HEK293 (cell line): ENCODE measurements at regions of chr19 and their contacts with region 1.

Region 1: DNA sequence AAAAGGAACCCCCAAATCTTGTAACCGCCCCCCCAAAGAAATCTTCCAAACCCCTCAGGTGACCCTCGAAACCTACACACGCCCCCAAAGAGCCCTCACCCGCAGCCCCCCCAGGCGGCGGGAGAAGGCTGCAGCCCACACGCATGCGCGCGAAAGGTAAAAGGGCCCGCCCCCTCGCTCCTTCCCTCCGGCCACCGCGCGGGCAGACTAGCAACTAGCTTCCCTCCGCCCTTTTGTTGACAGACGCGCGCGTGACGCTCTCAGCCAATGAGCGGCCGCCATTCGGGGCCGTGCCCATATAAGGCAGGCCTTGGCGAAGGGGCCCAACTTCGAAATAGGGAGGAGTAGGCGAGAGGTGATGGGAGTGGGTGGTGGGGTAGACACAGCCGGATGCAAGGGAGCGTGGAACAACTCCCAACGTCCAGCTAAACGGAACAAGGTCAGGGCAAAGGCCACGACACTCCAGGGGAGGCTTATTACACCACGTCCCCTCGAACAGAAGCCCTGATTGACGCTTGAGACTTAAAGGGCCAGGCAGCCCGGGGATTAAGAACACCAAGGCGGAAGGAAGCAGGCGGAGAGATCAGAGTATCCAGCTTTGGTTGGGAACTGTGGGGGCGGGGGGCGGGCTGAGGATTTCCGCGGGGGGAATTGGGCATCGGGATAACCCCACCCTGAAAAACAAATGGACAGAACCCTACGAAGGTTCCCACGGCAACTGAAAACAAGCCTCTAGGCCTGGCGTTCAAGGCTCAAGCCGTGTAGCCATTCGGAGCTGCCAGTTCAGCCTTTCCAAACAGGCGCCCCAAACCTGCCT is 13.3 kb downstream of the FBXO46 start:
- H3K4me3 ChIP-seq: peak overlapping the region; percentile 72
- H3K27ac ChIP-seq: peak overlapping the region; percentile 92
- H3K4me1 ChIP-seq: peaks cover 19% of the 10 kb centered on the region
- CTCF ChIP-seq: peak; percentile 81

Region 2: DNA sequence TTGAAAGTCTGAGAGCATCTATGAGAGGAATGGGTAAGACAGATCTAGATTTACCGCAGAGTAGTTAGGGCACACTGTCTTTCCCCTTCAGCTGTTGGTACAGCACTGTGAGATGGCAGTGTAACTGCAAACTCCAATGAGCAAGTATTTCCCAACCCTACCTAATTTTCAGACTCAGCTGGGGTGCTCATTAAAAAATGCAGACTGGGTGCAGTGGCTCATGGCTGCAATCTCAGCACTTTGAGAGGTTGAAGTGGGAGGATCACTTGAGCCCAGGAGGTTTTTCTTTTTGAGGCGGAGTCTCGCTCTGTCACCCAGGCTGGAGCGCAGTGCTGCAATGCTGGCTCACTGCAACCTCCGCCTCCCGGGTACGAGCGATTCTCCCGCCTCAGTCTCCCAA is 12.3 kb before region 1 on chr19:
- CTCF ChIA-PET with region 1: interaction called, 5 read pairs
- POLR2A ChIA-PET with region 1: interaction called, 17 read pairs
- H3K4me3 ChIP-seq: no peak overlapping the region
- H3K27ac ChIP-seq: no peak overlapping the region
- H3K4me1 ChIP-seq: no peaks in the 10 kb centered on the region
- CTCF ChIP-seq: no peak

Region 3: DNA sequence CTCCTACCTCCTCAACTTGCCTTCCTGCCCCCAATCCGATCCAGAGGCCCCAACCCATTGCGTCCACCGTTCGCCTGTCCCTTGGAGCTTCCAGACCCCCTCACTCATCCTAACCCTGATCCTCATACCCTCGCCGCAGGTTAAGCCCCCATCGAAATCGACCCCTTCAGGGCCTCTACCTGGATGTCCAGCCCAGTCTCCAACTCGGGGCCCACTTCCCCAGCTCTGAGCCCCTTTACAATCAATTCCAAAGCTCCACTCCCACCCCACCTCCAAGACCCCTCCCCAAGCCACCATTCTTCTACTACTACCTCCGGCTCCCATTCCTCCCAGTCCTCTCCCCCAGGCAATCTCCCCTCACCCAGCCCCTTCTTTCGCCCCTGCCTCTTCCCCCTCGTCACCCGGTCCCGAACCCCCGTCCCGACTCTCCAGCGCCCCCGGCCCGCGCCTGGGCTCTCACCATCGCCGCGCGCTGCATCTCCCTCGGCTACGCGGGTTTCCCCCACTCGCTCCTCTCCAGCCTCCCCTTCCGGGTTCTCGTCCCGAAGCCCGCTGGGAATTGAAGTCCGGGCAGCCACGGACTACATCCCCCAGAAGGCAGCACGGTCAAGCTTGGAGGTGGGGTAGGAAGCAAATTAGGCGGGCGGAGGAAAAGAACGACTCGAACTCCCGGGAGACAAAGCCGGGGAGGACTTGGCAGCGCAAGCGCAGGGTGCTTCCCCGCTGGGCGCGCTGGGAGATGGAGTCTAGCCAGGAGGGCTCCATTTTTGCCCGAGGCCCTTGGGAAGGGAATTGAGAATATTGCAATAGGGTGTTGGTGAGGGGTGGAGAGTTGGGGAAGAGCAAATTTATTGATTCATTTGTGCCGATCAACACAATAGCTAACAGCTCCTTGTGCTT is 13.3 kb after region 1 on chr19 and contains the start of gene FBXO46:
- CTCF ChIA-PET with region 1: interaction called, 6 read pairs
- POLR2A ChIA-PET with region 1: interaction called, 34 read pairs
- H3K4me3 ChIP-seq: peak within 1 kb of the TSS; percentile 66
- H3K27ac ChIP-seq: peak within 1 kb of the TSS; percentile 44; the same call in 1 of the 2 replicates
- H3K4me1 ChIP-seq: peaks cover 5% of the 10 kb centered on the region; the same call in 1 of the 2 replicates
- CTCF ChIP-seq: peak; percentile 94

Region 4: GRCh38 chr19:45882652-45883585 is 165.5 kb after region 1 on chr19:
- CTCF ChIA-PET with region 1: no interaction called
- POLR2A ChIA-PET with region 1: no interaction called
- H3K4me3 ChIP-seq: peak overlapping the region; percentile 23
- H3K27ac ChIP-seq: no peak overlapping the region
- H3K4me1 ChIP-seq: peaks cover 13% of the 10 kb centered on the region
- CTCF ChIP-seq: peak; percentile 95